ENCODE measurements at regions of chr4 and their contacts with region 1.

Region 1: DNA sequence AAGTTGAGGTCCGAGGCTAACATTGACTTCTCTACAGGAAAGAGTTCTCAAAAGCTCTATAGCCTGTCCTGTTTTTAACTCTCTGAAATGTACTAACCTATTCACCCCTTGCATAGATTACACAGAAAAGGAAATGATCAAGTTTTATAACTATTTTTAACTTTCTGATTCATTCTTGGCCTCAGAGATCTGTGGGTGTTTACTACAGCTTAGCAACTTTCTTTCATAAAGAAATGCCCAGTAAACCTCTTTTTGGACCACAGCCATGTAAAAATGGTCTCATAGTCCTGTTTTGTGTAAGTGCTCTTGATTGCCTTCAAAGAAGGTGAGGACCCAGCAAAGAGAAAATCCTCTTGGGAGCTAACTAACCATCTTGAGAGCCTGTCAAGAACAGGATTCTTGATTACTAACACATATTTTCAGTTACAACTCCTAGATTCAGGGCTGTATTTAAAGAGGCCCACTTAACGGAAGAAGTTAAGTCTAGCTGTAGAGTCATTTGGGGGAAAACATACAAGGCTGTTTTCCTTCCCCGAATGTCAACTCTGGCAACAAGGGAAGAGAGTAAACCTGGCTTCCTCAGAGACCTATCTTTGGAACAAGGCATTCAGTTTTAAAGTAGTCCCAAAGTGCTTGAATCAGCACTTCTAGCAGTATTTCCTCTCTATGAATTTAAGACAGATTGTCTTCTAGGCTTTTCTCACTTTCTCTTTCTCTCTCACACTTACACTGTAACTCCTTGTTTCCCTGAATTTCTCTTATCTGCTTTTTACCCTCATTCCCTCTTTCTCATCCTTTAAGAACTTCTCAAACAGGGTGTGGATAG is 78.2 kb downstream of the IL21 start:
- DNase-seq: no peak
- H3K4me3 Mint-ChIP-seq: peak overlapping the region; percentile 52
- H3K27ac Mint-ChIP-seq: peak overlapping the region; percentile 100
- H3K4me1 Mint-ChIP-seq: peaks cover 94% of the 10 kb centered on the region
- H3K27me3 Mint-ChIP-seq: no peaks in the 10 kb centered on the region

Region 2: GRCh38 chr4:122383341-122383740 is 159.3 kb before region 1 on chr4:
- CTCF ChIA-PET with region 1: no interaction called
- intact Hi-C with region 1: no loop called
- DNase-seq: no peak
- H3K4me3 Mint-ChIP-seq: no peak overlapping the region
- H3K27ac Mint-ChIP-seq: no peak overlapping the region
- H3K4me1 Mint-ChIP-seq: no peaks in the 10 kb centered on the region
- H3K27me3 Mint-ChIP-seq: no peaks in the 10 kb centered on the region

Region 3: DNA sequence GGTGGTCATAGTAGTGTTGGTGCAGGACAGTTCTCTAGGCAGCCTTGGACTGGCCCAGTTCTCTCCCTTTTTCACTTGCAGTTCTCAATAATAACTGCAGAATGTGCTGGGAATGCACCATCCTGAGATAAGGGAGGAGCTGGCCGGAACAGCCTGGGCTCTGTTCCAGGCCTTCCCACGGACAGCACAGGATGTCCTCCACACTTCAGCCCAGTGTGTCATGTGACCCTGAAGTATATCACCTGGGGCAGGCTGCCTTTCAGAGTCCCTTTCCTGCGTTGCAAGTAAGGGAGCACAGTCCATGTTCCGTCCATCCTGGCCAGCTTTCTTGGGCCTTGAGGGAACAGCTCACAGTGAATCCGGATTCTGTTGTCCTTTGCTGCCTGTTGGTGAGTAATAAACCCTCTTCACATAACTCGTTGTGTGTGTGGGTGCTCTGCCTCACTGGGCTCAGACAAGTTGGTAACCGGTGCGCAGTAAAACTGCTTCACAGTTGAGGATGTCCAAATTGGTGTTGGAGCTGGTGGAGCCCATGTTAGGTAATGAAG is 157.6 kb after region 1 on chr4:
- CTCF ChIA-PET with region 1: no interaction called
- intact Hi-C with region 1: loop called (anchors 1 kb)
- DNase-seq: no peak
- H3K4me3 Mint-ChIP-seq: peak overlapping the region; percentile 69
- H3K27ac Mint-ChIP-seq: peak overlapping the region; percentile 99
- H3K4me1 Mint-ChIP-seq: peaks cover 56% of the 10 kb centered on the region
- H3K27me3 Mint-ChIP-seq: peaks cover 4% of the 10 kb centered on the region